Posterior vena cava (tissue), 2 donors: ENCODE measurements at regions of chr10 and their contacts with region 1.

Region 1: GRCh38 chr10:90969947-90970684 is 49.2 kb upstream of the ANKRD1 start:
- DNase-seq: no peak

Region 2: GRCh38 chr10:90930070-90930837 is 39.9 kb before region 1 on chr10:
- intact Hi-C with region 1: loop called in 1 of 2 experiments (anchors 5 kb)
- DNase-seq: no peak

Region 3: DNA sequence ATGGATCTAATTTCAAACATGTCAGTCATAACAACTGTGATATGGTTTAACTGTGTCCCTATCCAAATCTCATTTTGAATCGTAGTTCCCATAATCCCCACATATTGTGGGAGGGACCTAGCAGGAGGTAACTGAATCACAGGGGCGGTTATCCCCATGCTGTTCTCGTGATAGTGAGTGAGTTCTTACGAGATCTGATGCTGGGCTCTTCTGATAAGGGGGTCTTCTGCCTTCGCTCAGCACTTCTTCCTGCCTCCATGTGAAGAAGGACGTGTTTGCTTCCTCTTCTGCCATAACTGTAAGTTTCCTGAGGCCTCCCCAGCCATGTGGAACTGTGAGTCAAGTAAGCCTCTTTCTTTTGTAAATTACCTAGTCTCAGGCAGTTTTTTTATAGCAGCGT is 112.3 kb after region 1 on chr10:
- intact Hi-C with region 1: no loop called
- DNase-seq: no peak

Region 4: GRCh38 chr10:91271886-91272285 is 301.8 kb after region 1 on chr10:
- intact Hi-C with region 1: no loop called
- DNase-seq: no peak

Region 5: GRCh38 chr10:92113911-92114600 is 1143.9 kb after region 1 on chr10:
- intact Hi-C with region 1: no loop called
- DNase-seq: no peak